ENCODE measurements at regions of chr3 and their contacts with region 1.

Region 1: DNA sequence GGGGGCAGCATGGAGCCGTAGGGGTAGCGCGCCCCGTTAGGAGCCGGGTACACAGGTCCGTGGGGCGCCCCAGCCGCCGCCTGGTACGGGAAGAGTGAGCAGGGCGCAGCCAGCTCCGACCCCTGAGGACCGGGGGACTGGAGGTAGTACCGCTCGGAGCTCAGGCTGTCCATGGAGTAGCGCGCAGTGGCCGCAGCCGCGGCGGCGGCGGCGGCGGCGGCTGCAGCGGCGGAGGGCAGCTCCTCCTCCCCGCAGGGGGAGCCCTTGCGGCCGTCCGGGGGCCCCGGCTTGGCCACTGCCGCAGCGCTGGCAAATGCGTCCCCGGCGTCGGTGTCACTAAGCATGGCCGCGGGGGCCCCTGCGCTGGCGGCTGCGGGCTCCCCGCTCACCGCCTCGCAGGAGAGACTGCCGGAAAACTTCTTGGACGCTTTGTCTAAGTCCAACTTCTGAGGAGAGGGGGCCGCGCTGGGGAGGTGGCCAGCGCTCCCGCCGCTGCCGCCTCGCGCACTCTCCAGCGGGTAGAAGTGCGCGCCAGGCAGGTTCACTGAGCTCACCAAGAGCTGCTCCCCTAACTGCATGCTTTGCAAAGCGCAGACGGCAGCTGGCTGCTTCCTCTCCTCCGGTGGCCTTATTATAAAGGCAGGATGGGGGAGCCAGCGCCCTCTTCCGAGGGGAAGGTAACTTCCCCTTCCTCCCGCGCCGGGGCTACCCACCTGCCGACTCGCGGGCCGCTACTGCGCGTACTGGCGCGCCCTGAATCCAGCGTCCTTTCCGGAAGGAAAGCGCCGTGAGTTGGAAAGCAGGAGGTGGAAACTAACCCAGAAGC is at the start of gene EOMES:
- DNase-seq: peak; percentile 58 to 91 (median 78)
- ATAC-seq: peak; percentile 77
- H3K4me3 ChIP-seq: peak within 1 kb of the TSS; percentile 73 to 94
- H3K4me3 Mint-ChIP-seq: peak within 1 kb of the TSS; percentile 93
- H3K27ac ChIP-seq: peak within 1 kb of the TSS; percentile 50 to 74
- H3K27ac Mint-ChIP-seq: peak within 1 kb of the TSS; percentile 77
- H3K4me1 ChIP-seq: peaks cover 26% of the 10 kb centered on the region
- H3K4me1 Mint-ChIP-seq: peaks cover 51% of the 10 kb centered on the region
- H3K27me3 ChIP-seq: peaks cover 14 to 37% of the 10 kb centered on the region in 2 experiments
- H3K27me3 Mint-ChIP-seq: peaks cover 36% of the 10 kb centered on the region
- CTCF ChIP-seq: peak; percentile 38
- total RNA-seq, gene EOMES: 8.6 to 8.9 TPM

Region 2: GRCh38 chr3:26668171-26668570 is 1053.8 kb before region 1 on chr3:
- CTCF ChIA-PET with region 1: no interaction called
- POLR2A ChIA-PET with region 1: no interaction called
- intact Hi-C with region 1: no loop called
- DNase-seq: no peak
- ATAC-seq: no peak
- H3K4me3 ChIP-seq: no peak overlapping the region
- H3K4me3 Mint-ChIP-seq: no peak overlapping the region
- H3K27ac ChIP-seq: no peak overlapping the region
- H3K27ac Mint-ChIP-seq: no peak overlapping the region
- H3K4me1 ChIP-seq: no peaks in the 10 kb centered on the region
- H3K4me1 Mint-ChIP-seq: no peaks in the 10 kb centered on the region
- H3K27me3 ChIP-seq: no peaks in the 10 kb centered on the region
- H3K27me3 Mint-ChIP-seq: no peaks in the 10 kb centered on the region
- CTCF ChIP-seq: no peak

Region 3: GRCh38 chr3:27888562-27888961 is 166.6 kb after region 1 on chr3:
- CTCF ChIA-PET with region 1: interaction called, 3 read pairs
- POLR2A ChIA-PET with region 1: no interaction called
- intact Hi-C with region 1: loop called (anchors 5 to 10 kb)
- DNase-seq: peak in 2 of 9 experiments; percentile 10 to 20
- ATAC-seq: no peak
- H3K4me3 ChIP-seq: no peak overlapping the region
- H3K4me3 Mint-ChIP-seq: no peak overlapping the region
- H3K27ac ChIP-seq: no peak overlapping the region
- H3K27ac Mint-ChIP-seq: no peak overlapping the region
- H3K4me1 ChIP-seq: peaks cover 8% of the 10 kb centered on the region
- H3K4me1 Mint-ChIP-seq: peaks cover 18% of the 10 kb centered on the region
- H3K27me3 ChIP-seq: no peaks in the 10 kb centered on the region
- H3K27me3 Mint-ChIP-seq: no peaks in the 10 kb centered on the region
- CTCF ChIP-seq: no peak

Region 4: GRCh38 chr3:27993051-27993450 is 271.1 kb after region 1 on chr3:
- CTCF ChIA-PET with region 1: interaction called, 5 read pairs
- POLR2A ChIA-PET with region 1: no interaction called
- intact Hi-C with region 1: loop called in 1 of 2 experiments (anchors 5 kb)
- DNase-seq: no peak
- ATAC-seq: no peak
- H3K4me3 ChIP-seq: no peak overlapping the region
- H3K4me3 Mint-ChIP-seq: no peak overlapping the region
- H3K27ac ChIP-seq: no peak overlapping the region
- H3K27ac Mint-ChIP-seq: no peak overlapping the region
- H3K4me1 ChIP-seq: no peaks in the 10 kb centered on the region
- H3K4me1 Mint-ChIP-seq: peaks cover 4% of the 10 kb centered on the region
- H3K27me3 ChIP-seq: no peaks in the 10 kb centered on the region
- H3K27me3 Mint-ChIP-seq: no peaks in the 10 kb centered on the region
- CTCF ChIP-seq: no peak

Region 5: DNA sequence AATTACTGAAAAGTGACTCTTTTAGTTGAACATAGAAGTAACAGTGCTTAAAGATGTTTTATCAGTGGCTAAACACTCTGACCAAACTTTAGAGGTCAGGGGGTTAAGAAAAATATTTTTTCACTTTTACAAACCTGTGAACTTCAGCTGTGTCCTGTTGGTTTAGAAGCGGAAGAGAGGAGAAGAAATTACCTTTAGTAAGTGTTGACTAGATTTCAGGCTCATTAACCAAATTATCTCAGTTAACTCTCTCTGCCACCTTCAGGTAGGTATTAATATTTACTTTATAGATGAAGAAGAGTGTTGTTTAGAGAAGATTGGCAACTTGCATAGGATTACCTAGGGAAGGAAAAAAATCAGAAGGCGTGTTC is 367.6 kb after region 1 on chr3:
- CTCF ChIA-PET with region 1: interaction called, 25 read pairs
- POLR2A ChIA-PET with region 1: no interaction called
- intact Hi-C with region 1: loop called in 1 of 2 experiments (anchors 1 kb)
- DNase-seq: peak in 2 of 9 experiments; percentile 25 to 48
- ATAC-seq: no peak
- H3K4me3 ChIP-seq: no peak overlapping the region
- H3K4me3 Mint-ChIP-seq: no peak overlapping the region
- H3K27ac ChIP-seq: peak overlapping the region in 1 of 2 experiments; percentile 47
- H3K27ac Mint-ChIP-seq: peak overlapping the region; percentile 64
- H3K4me1 ChIP-seq: no peaks in the 10 kb centered on the region
- H3K4me1 Mint-ChIP-seq: peaks cover 6% of the 10 kb centered on the region
- H3K27me3 ChIP-seq: no peaks in the 10 kb centered on the region
- H3K27me3 Mint-ChIP-seq: no peaks in the 10 kb centered on the region
- CTCF ChIP-seq: no peak

Region 6: DNA sequence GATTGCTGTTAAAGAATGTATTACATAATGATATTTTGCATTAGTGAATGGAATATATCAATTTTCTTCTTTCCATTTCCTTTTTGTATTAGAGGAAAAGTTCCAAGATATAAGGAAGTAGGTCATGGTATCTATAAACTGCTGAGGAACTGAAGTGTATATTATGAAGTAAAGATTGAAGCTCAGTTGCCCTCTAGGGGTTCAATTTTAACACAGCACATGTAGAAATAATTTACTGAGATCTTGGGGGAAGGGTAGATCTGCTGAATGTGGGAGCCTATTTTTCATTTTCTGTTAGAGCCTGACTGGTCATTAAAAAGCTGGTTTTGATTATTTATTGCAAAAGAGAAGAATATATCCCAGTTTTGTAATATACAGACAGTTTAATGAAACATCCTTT is 564.7 kb after region 1 on chr3:
- CTCF ChIA-PET with region 1: interaction called, 51 read pairs
- POLR2A ChIA-PET with region 1: interaction called, 10 read pairs
- intact Hi-C with region 1: no loop called
- DNase-seq: peak in 2 of 9 experiments; percentile 60 to 71
- ATAC-seq: peak; percentile 83
- H3K4me3 ChIP-seq: peak overlapping the region in 1 of 2 experiments; percentile 21
- H3K4me3 Mint-ChIP-seq: no peak overlapping the region
- H3K27ac ChIP-seq: peak overlapping the region in 1 of 2 experiments; percentile 36
- H3K27ac Mint-ChIP-seq: no peak overlapping the region
- H3K4me1 ChIP-seq: no peaks in the 10 kb centered on the region
- H3K4me1 Mint-ChIP-seq: peaks cover 34% of the 10 kb centered on the region
- H3K27me3 ChIP-seq: no peaks in the 10 kb centered on the region
- H3K27me3 Mint-ChIP-seq: no peaks in the 10 kb centered on the region
- CTCF ChIP-seq: peak; percentile 60

Measured in CD8-positive, alpha-beta T cell (primary cell).